Activated CD4-positive, alpha-beta memory T cell treated with anti-CD3 and anti-CD28 coated beads for 36 hours (primary cell): ENCODE measurements at regions of chr10 and their contacts with region 1.

Region 1: DNA sequence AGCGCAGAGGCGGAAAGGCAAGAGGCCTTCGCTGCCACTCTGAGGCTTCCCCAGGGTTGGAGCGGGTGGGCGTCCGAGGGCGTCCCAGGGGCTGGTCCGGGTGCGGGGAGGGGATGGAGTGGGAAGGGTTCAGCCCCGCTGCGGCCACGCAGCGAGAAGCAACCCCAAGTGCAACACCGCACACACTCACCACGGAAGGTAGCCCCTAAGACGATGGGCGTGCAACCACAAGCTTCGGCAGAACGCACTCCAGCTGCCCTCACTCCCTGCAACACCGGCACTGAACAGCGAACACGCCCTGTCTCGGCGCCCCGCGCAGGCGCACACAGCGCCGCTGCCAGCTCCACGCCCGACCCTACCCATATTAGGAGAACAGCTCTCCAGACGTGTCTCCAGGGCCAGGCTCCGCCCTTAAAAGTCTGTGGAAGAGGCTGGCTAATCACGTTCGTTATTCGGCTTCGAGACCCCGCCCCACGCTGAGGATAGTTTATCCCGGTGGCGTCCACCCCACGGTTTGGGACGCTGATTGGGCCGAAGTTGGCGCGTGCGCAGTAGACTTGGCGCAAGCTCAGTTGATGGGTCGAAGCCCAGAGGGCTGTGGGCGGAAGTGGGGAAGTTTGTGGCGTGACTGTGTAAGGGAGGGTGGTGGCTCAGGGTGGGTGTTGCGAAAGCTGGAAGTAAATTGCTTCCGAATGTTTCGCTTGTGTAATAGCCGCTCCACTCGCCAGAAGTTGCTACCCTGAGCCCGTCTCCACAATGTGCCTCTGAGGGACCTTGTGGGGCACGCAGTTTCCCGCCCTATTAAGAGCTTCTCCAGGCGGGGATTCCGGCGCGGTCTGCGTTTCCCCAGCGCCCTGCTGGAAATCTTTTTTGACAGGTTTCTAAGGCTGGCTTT is at the start of gene RSU1:
- DNase-seq: peak; percentile 100
- H3K4me3 Mint-ChIP-seq: peak within 1 kb of the TSS; percentile 91
- H3K27ac Mint-ChIP-seq: peak within 1 kb of the TSS; percentile 90
- H3K4me1 Mint-ChIP-seq: peaks cover 28% of the 10 kb centered on the region
- H3K27me3 Mint-ChIP-seq: peaks cover 1% of the 10 kb centered on the region
- total RNA-seq, gene RSU1: 60.6 to 61.9 TPM

Region 2: GRCh38 chr10:16195178-16195769 is 622.1 kb before region 1 on chr10:
- CTCF ChIA-PET with region 1: no interaction called
- POLR2A ChIA-PET with region 1: no interaction called
- intact Hi-C with region 1: loop called (anchors 1 kb)
- DNase-seq: no peak
- H3K4me3 Mint-ChIP-seq: no peak overlapping the region
- H3K27ac Mint-ChIP-seq: no peak overlapping the region
- H3K4me1 Mint-ChIP-seq: peaks cover 13% of the 10 kb centered on the region
- H3K27me3 Mint-ChIP-seq: peaks cover 1% of the 10 kb centered on the region

Region 3: DNA sequence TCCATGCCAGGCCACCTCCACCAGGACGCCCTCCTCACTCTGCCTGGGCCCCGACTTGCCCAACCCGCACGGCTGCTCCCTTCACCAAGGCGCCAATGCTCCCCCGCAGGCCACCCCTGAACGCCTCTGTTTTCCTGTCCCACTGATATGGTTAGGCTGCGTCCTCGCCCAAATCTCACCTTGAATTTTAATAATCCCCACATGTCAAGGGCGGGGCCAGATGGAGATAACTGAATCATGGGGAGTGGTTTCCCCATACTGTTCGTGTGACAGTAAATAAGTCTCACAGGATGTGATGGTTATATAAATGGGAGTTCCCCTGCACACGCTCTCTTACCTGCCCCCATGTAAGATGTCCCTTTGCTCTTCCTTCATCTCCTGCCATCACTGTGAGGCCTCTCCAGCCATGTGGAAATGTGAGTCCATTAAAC is 30.0 kb before region 1 on chr10:
- CTCF ChIA-PET with region 1: interaction called, 3 read pairs
- POLR2A ChIA-PET with region 1: interaction called, 3 read pairs
- intact Hi-C with region 1: loop called (anchors 1 kb)
- DNase-seq: peak; percentile 81
- H3K4me3 Mint-ChIP-seq: peak overlapping the region; percentile 59
- H3K27ac Mint-ChIP-seq: peak overlapping the region; percentile 86
- H3K4me1 Mint-ChIP-seq: peaks cover 27% of the 10 kb centered on the region
- H3K27me3 Mint-ChIP-seq: no peaks in the 10 kb centered on the region

Region 4: DNA sequence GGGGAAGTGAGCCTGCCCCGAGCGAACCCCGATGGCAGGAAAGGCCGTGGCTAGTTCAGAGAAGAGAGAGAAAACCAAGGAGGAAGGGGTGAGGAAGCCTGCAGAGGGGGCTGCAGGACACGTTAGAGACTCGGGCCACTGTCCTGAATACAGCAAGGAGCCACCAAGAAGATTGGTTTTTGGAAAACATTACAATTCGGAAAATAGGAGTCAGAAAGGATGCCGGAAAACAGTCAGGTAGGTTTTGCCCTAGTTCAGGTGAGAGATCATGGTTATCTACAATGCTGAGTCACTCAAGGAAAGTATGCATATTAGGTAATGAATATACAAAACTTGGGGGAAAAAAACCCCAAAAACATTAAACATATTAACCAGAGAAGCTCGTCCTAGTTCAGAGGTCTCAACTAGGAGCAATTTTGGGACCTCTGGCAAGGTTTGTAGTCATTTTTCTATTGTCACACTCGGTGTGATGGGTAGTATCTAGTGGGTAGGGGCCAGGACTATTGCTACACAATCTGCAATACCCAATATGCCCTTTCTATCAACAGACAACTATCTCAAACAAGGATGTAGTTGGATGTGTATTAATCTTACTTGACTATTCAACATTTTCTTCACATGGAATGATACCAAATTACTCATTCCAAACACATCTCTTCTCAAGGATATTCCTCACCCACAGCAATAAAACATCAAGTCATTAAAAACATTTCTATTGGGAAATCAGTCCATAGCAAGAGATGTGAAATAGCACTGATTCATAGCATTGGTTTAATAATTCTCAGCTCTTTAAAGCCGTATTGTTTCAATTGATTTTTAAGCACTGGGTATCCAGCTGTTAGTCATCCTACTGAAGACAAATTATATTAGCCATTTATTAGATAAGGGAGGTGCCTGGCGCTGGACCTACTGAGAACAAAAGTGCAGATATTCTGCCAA is 74.3 kb after region 1 on chr10:
- CTCF ChIA-PET with region 1: no interaction called
- POLR2A ChIA-PET with region 1: no interaction called
- intact Hi-C with region 1: no loop called
- DNase-seq: peak; percentile 69
- H3K4me3 Mint-ChIP-seq: peak overlapping the region; percentile 65
- H3K27ac Mint-ChIP-seq: peak overlapping the region; percentile 63
- H3K4me1 Mint-ChIP-seq: peaks cover 11% of the 10 kb centered on the region
- H3K27me3 Mint-ChIP-seq: no peaks in the 10 kb centered on the region

Region 5: DNA sequence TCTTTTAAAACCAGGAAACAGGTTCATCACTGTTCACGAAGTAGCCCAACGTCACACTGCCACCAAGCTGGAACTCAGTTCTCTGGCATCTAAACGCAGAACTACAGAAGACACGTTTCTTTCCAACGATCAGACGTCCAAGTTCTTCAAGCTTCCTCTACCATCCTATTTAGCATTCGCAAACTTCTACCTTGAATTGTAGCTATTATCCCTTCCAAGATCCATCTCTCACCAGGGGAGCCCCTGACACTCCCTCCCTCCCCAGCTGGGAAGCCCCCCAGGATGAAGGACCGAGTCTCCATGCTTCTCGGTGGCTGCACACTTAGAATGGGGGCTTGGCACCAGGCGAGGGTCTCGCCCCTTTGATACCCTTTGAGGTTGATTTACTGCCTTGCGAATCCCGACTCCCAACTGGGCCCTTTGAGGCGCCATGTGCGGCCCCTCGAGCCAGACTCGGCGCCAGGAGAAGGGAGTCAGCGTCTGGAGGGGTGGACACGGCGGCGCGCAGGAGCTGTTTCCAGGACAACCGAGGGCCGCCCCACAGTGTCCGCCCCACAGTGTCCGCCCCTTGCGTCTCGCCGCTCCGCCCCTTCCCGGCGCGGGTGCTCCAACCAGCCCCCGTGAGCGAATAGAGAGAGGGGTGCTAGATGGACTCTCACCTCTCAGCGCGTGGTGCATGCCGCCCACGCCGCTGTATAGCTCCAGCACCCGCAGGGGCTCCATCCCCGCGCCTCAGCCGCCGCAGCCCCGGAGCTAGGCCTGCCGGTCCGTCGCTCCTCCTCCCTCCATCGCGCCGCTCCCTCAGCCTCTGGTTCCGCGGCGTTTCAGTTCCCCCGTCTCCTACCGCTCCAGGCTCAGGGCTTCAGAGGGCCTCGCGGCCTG is 383.8 kb after region 1 on chr10 and contains the start of gene TRDMT1:
- CTCF ChIA-PET with region 1: no interaction called
- POLR2A ChIA-PET with region 1: no interaction called
- intact Hi-C with region 1: loop called (anchors 1 kb)
- DNase-seq: peak; percentile 82
- H3K4me3 Mint-ChIP-seq: peak within 1 kb of the TSS; percentile 94
- H3K27ac Mint-ChIP-seq: peak within 1 kb of the TSS; percentile 91
- H3K4me1 Mint-ChIP-seq: peaks cover 46% of the 10 kb centered on the region
- H3K27me3 Mint-ChIP-seq: no peaks in the 10 kb centered on the region
- total RNA-seq, gene TRDMT1: 5.0 to 5.8 TPM

Region 6: DNA sequence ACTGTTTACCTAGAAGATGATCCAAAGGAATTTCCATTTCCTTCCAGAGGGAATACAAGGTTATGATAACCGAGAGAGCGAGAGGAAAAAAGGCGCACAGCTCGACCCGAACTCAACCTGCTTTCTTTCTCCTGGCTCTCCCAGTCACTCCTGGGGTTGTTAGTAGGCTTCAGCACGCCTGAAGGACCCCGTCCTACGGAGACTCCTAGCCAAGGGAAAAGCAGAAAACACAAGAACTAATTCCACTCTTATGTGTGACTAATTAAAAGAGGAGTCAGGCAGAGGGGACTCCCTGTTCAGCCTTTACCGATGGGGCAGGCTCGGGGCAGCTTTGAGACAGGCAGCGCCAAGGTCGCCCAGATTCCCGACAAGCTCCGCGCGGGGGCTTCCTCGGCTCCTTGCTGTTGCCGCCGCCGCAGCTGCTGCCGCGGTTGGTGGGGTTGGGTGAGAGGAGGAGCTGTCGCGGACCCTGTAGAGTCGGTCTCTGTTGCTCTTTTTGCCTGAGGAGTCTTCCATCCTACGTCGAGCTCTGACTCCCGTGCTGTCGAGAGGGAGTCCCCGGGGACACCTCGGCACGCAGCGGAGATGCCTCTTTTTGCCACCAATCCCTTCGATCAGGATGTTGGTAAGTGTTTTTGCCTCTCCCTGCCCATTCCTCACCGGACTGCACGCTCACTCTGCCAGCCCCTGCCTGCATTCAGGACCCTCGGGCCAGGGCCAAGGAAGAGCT is 826.5 kb after region 1 on chr10 and contains the start of gene STAM:
- CTCF ChIA-PET with region 1: no interaction called
- POLR2A ChIA-PET with region 1: interaction called, 4 read pairs
- intact Hi-C with region 1: loop called (anchors 1 kb)
- DNase-seq: peak; percentile 94
- H3K4me3 Mint-ChIP-seq: peak within 1 kb of the TSS; percentile 95
- H3K27ac Mint-ChIP-seq: peak within 1 kb of the TSS; percentile 99
- H3K4me1 Mint-ChIP-seq: peaks cover 53% of the 10 kb centered on the region
- H3K27me3 Mint-ChIP-seq: no peaks in the 10 kb centered on the region
- total RNA-seq, gene STAM: 24.5 to 29.9 TPM